Activated CD4-positive, alpha-beta memory T cell treated with anti-CD3 and anti-CD28 coated beads for 36 hours (primary cell): ENCODE measurements at regions of chr6 and their contacts with region 1.

Region 1: GRCh38 chr6:106273087-106273486 is 52.5 kb downstream of the ATG5 start:
- DNase-seq: no peak
- H3K4me3 Mint-ChIP-seq: no peak overlapping the region
- H3K27ac Mint-ChIP-seq: peak overlapping the region; percentile 57
- H3K4me1 Mint-ChIP-seq: peaks cover 15% of the 10 kb centered on the region
- H3K27me3 Mint-ChIP-seq: no peaks in the 10 kb centered on the region

Region 2: GRCh38 chr6:105424175-105424783 is 848.8 kb before region 1 on chr6:
- CTCF ChIA-PET with region 1: no interaction called
- POLR2A ChIA-PET with region 1: no interaction called
- intact Hi-C with region 1: no loop called
- DNase-seq: peak; percentile 75
- H3K4me3 Mint-ChIP-seq: no peak overlapping the region
- H3K27ac Mint-ChIP-seq: no peak overlapping the region
- H3K4me1 Mint-ChIP-seq: no peaks in the 10 kb centered on the region
- H3K27me3 Mint-ChIP-seq: no peaks in the 10 kb centered on the region

Region 3: GRCh38 chr6:106181664-106182418 is 91.2 kb before region 1 on chr6:
- CTCF ChIA-PET with region 1: no interaction called
- POLR2A ChIA-PET with region 1: no interaction called
- intact Hi-C with region 1: loop called (anchors 10 kb)
- DNase-seq: no peak
- H3K4me3 Mint-ChIP-seq: no peak overlapping the region
- H3K27ac Mint-ChIP-seq: peak overlapping the region; percentile 46
- H3K4me1 Mint-ChIP-seq: peaks cover 60% of the 10 kb centered on the region
- H3K27me3 Mint-ChIP-seq: no peaks in the 10 kb centered on the region

Region 4: DNA sequence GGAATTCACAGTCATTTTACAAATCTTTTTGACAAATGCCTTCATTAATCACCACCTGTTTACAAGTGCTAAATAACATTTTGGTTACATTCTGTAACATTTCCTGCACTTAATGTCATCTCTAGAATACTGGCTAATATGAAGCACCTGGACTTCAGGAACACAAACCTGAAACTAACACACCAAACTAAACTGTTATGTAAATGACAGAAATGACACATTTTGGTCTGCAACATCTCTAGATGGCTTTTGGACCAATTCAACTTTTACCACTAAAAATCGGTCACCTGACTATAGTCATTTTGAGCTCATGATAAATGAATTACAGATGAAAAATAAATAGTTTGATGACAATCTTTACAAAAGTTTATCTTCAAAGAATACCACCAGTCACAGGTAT is 28.2 kb before region 1 on chr6:
- CTCF ChIA-PET with region 1: no interaction called
- POLR2A ChIA-PET with region 1: no interaction called
- intact Hi-C with region 1: loop called (anchors 2 kb)
- DNase-seq: no peak
- H3K4me3 Mint-ChIP-seq: no peak overlapping the region
- H3K27ac Mint-ChIP-seq: no peak overlapping the region
- H3K4me1 Mint-ChIP-seq: peaks cover 29% of the 10 kb centered on the region
- H3K27me3 Mint-ChIP-seq: no peaks in the 10 kb centered on the region